Mammary epithelial cell (primary cell): ENCODE measurements at regions of chr5 and their contacts with region 1.

Region 1: GRCh38 chr5:8981496-8981895 is 564.4 kb downstream of the SEMA5A start:
- DNase-seq: peak; percentile 87
- H3K4me3 ChIP-seq: no peak overlapping the region
- H3K27ac ChIP-seq: peak overlapping the region; percentile 33
- H3K4me1 ChIP-seq: peaks cover 21% of the 10 kb centered on the region
- H3K27me3 ChIP-seq: no peaks in the 10 kb centered on the region
- CTCF ChIP-seq: peak in 1 of 2 donors; percentile 6

Region 2: GRCh38 chr5:8944005-8944404 is 37.5 kb before region 1 on chr5:
- CTCF ChIA-PET with region 1: no interaction called
- dilution Hi-C with region 1: no loop called
- in situ Hi-C with region 1: no loop called
- intact Hi-C with region 1: loop called (anchors 2 kb)
- DNase-seq: peak; percentile 51
- H3K4me3 ChIP-seq: no peak overlapping the region
- H3K27ac ChIP-seq: no peak overlapping the region
- H3K4me1 ChIP-seq: peaks cover 9% of the 10 kb centered on the region
- H3K27me3 ChIP-seq: no peaks in the 10 kb centered on the region
- CTCF ChIP-seq: no peak